Adrenal gland (tissue), 19 donors: ENCODE measurements at regions of chr12 and their contacts with region 1.

Region 1: GRCh38 chr12:117139025-117139717 is 40.0 kb upstream of the TESC start:
- DNase-seq: no peak
- H3K4me3 ChIP-seq: no peak overlapping the region
- H3K27ac ChIP-seq: peak overlapping the region in 1 of 5 donors; percentile 15
- H3K4me1 ChIP-seq: no peaks in the 10 kb centered on the region
- H3K27me3 ChIP-seq: no peaks in the 10 kb centered on the region
- CTCF ChIP-seq: no peak
- POLR2A ChIP-seq: no peak

Region 2: DNA sequence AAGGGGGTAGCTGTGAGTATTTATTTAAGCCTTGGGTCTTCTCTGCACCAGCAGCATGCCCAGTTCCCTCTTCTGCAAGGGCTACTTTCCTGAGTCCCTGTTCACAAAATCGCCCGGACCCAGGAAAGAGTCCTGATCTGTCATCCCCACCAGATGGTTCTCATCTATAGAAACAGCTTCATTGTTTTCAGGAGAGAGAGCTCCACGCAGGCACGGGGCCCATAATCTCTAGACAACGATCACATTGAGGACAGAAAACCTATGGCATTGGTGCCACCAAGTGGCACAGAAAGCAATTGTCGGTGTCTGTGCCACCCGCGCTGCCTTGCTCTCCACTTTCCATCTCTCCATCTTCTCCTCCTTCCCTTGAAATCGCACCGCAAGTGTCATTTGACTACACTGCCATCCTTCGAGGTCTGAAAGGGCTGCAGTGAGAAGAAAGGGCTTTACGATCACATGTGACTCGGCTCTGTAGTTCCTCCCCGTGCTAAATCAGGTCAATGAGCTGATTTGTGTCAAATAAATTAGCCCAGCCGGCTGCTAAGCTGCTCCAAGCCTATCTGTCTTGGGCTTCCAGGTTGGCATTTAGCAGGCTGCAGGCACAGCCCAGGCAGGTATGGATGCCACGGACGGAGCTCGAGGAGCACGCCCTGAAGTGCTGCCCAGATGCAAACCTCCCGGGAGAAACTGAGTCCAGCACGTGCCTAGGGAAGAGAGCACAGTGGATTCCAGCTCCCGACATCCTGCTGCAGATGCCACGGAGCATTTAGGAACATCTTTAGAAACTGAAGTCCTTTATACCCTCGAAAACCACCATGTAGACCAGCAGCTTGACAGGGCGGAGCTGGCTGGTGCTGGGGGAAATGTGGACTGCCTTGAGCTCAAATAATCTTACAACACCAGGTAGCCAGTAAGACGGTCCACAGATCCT is 430.1 kb before region 1 on chr12:
- intact Hi-C with region 1: loop called in 1 of 2 experiments (anchors 5 kb)
- DNase-seq: peak; percentile 57 to 87 (median 68)
- H3K4me3 ChIP-seq: no peak overlapping the region
- H3K27ac ChIP-seq: no peak overlapping the region
- H3K4me1 ChIP-seq: peaks cover 6 to 12% of the 10 kb centered on the region in 2 donors
- H3K27me3 ChIP-seq: no peaks in the 10 kb centered on the region
- CTCF ChIP-seq: peak; percentile 41 to 76 (median 72)
- POLR2A ChIP-seq: no peak

Region 3: GRCh38 chr12:117063162-117063911 is 75.8 kb before region 1 on chr12:
- intact Hi-C with region 1: no loop called
- DNase-seq: no peak
- H3K4me3 ChIP-seq: no peak overlapping the region
- H3K27ac ChIP-seq: peak overlapping the region in 1 of 5 donors; percentile 37
- H3K4me1 ChIP-seq: peaks cover 11 to 27% of the 10 kb centered on the region in 2 donors
- H3K27me3 ChIP-seq: no peaks in the 10 kb centered on the region
- CTCF ChIP-seq: no peak
- POLR2A ChIP-seq: no peak

Region 4: DNA sequence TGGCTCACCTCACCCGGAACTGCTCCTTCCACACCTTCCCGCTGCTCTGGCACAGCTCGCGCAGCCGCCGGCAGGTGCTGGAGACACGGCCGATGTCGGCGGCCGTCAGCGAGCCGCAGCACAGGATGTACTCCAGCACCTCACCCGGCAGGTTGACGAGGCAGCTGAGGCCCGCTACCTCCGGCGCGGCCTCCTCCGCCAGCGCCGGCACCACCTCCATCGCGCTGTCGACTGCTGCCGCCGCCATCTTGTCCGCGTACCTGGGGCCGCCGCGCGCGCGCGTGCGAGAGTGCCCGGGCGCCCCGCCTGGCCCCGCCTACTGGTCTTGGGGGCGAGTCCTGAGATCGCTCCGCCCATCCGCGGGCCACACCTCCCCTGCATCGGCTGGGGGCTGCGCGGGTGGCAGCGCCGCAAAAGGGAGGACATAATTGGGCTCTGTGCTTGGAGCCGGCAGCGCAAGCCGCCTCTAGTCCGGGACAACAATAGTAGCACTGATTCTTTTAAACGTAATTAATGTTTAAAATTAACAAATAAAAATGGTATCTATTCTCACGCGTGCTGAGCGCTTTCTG is 51.1 kb after region 1 on chr12 and contains the start of gene FBXO21:
- intact Hi-C with region 1: no loop called
- DNase-seq: peak; percentile 87 to 94 (median 92)
- H3K4me3 ChIP-seq: peak within 1 kb of the TSS; percentile 49 to 99 (median 68)
- H3K27ac ChIP-seq: peak within 1 kb of the TSS; percentile 61 to 92 (median 84)
- H3K4me1 ChIP-seq: peaks cover 11 to 37% of the 10 kb centered on the region in 2 donors
- H3K27me3 ChIP-seq: no peaks in the 10 kb centered on the region
- CTCF ChIP-seq: no peak
- POLR2A ChIP-seq: peak; percentile 88 to 97
- total RNA-seq, gene FBXO21: 74.5 to 309 (median 127) TPM

Region 5: DNA sequence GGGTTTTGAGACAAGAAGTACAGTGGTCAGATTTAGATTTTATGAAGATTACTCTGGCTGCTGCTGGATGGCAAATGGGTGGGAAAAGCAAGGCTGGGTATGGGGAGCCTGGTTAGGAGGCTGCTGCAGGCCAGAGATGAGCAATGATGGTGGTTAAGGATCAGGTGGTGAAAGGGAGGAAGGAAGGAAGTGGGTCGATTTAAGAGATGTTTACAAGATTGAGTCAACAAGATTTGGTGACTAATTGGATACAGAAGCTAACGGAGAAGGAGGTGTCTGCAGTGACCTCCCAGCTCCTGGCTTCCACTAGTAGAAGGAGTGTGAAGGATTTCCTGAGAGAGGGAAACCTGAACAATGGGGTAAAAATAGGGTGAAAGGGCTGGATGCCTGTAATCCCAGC is 203.5 kb after region 1 on chr12:
- intact Hi-C with region 1: no loop called
- DNase-seq: no peak
- H3K4me3 ChIP-seq: no peak overlapping the region
- H3K27ac ChIP-seq: no peak overlapping the region
- H3K4me1 ChIP-seq: no peaks in the 10 kb centered on the region
- H3K27me3 ChIP-seq: peaks cover 4% of the 10 kb centered on the region
- CTCF ChIP-seq: no peak
- POLR2A ChIP-seq: no peak

Region 6: GRCh38 chr12:118560733-118561132 is 1421.6 kb after region 1 on chr12:
- intact Hi-C with region 1: no loop called
- DNase-seq: no peak
- H3K4me3 ChIP-seq: no peak overlapping the region
- H3K27ac ChIP-seq: no peak overlapping the region
- H3K4me1 ChIP-seq: no peaks in the 10 kb centered on the region
- H3K27me3 ChIP-seq: no peaks in the 10 kb centered on the region
- CTCF ChIP-seq: no peak
- POLR2A ChIP-seq: no peak